Upper lobe of right lung (tissue), 1 donor: ENCODE measurements at regions of chr16 and their contacts with region 1.

Region 1: GRCh38 chr16:84952335-84953189 is 58.8 kb downstream of the ZDHHC7 start:
- DNase-seq: peak; percentile 76
- ATAC-seq: peak; percentile 95
- H3K4me3 ChIP-seq: no peak overlapping the region
- H3K27ac ChIP-seq: no peak overlapping the region
- H3K4me1 ChIP-seq: peaks cover 18% of the 10 kb centered on the region
- H3K27me3 ChIP-seq: no peaks in the 10 kb centered on the region
- CTCF ChIP-seq: peak; percentile 92

Region 2: GRCh38 chr16:84759061-84759460 is 193.5 kb before region 1 on chr16:
- intact Hi-C with region 1: loop called (anchors 5 kb)
- DNase-seq: no peak
- ATAC-seq: no peak
- H3K4me3 ChIP-seq: no peak overlapping the region
- H3K27ac ChIP-seq: no peak overlapping the region
- H3K4me1 ChIP-seq: peaks cover 19% of the 10 kb centered on the region
- H3K27me3 ChIP-seq: no peaks in the 10 kb centered on the region
- CTCF ChIP-seq: no peak

Region 3: DNA sequence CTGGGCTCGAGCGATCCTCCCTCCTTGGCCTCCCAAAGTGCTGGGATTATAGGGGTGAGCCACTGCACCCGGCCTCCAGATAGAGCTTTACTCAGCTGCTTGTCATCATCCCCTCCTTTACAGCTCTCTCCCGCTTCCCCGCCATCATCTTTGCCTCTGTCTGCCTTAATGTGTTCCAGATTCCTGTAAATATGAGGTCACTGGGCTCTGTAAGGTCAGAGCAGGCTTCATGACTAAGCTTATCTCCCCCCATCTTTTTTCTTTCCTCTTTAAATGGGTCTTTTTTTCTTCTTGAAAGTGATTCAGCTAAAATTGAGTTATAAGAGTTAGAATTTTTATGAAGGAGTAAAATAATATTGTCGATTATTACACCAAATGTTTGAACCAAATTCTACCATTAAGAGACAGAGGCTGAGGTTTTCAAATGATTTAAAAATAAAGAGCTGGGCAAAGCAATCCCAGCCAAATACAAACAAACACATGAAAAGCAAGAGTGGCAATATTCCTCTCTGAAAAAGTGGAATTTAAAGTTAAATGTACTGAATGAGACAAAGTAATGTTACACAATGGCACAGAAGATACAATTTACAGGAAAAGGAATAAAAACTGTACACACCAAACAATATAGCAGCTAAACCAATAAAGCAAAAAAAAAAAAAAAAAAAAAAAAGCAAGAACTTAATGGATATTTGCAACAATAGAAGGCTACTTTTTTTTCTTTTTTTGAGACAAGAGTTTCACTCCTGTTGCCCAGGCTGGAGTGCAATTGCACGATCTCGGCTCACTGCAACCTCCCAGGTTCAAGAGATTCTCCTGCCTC is 70.7 kb before region 1 on chr16:
- intact Hi-C with region 1: no loop called
- DNase-seq: no peak
- ATAC-seq: no peak
- H3K4me3 ChIP-seq: no peak overlapping the region
- H3K27ac ChIP-seq: no peak overlapping the region
- H3K4me1 ChIP-seq: no peaks in the 10 kb centered on the region
- H3K27me3 ChIP-seq: no peaks in the 10 kb centered on the region
- CTCF ChIP-seq: no peak